ENCODE measurements at regions of chr2 and their contacts with region 1.

Region 1: DNA sequence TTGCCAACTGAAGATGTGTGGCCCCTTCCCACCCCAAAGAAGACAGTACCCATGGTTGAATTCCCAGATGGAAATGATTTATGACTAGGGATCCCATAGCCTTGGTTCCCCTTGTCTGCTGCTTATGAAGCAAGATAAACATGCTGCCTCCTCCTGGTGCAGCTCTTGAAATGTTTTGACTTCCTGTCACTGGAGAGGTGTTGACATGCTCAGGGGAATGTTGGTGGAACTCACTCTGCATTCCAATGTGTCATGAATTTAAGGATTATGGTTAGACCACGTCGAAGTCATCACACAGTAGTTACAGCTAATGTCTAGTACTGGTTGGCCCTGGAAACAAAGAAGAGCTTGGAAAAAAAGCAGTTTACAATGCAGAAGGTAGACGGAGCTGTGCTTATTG is 69.0 kb upstream of the FAM110C start:
- DNase-seq: peak; percentile 72
- H3K4me3 ChIP-seq: no peak overlapping the region
- H3K27ac ChIP-seq: no peak overlapping the region
- H3K4me1 ChIP-seq: peaks cover 10% of the 10 kb centered on the region
- H3K27me3 ChIP-seq: no peaks in the 10 kb centered on the region
- CTCF ChIP-seq: peak; percentile 13 to 49

Region 2: GRCh38 chr2:166381-166780 is 51.1 kb after region 1 on chr2:
- CTCF ChIA-PET with region 1: no interaction called
- dilution Hi-C with region 1: loop called (anchors 5 kb)
- in situ Hi-C with region 1: no loop called
- intact Hi-C with region 1: no loop called
- DNase-seq: no peak
- H3K4me3 ChIP-seq: no peak overlapping the region
- H3K27ac ChIP-seq: no peak overlapping the region
- H3K4me1 ChIP-seq: no peaks in the 10 kb centered on the region
- H3K27me3 ChIP-seq: no peaks in the 10 kb centered on the region
- CTCF ChIP-seq: no peak

Region 3: GRCh38 chr2:567850-568638 is 452.7 kb after region 1 on chr2:
- CTCF ChIA-PET with region 1: no interaction called
- dilution Hi-C with region 1: no loop called
- in situ Hi-C with region 1: no loop called
- intact Hi-C with region 1: no loop called
- DNase-seq: peak; percentile 32
- H3K4me3 ChIP-seq: no peak overlapping the region
- H3K27ac ChIP-seq: no peak overlapping the region
- H3K4me1 ChIP-seq: no peaks in the 10 kb centered on the region
- H3K27me3 ChIP-seq: no peaks in the 10 kb centered on the region
- CTCF ChIP-seq: no peak

Measured in mammary epithelial cell (primary cell).